Tibial artery (tissue), 4 donors: ENCODE measurements at regions of chr9 and their contacts with region 1.

Region 1: GRCh38 chr9:6383551-6384225 is 29.3 kb upstream of the UHRF2 start:
- DNase-seq: no peak
- H3K4me3 ChIP-seq: no peak overlapping the region
- H3K27ac ChIP-seq: peak overlapping the region; percentile 66 to 70
- H3K4me1 ChIP-seq: peaks cover 0 to 25% (median 3%) of the 10 kb centered on the region in 4 donors
- H3K27me3 ChIP-seq: no peaks in the 10 kb centered on the region
- CTCF ChIP-seq: no peak

Region 2: DNA sequence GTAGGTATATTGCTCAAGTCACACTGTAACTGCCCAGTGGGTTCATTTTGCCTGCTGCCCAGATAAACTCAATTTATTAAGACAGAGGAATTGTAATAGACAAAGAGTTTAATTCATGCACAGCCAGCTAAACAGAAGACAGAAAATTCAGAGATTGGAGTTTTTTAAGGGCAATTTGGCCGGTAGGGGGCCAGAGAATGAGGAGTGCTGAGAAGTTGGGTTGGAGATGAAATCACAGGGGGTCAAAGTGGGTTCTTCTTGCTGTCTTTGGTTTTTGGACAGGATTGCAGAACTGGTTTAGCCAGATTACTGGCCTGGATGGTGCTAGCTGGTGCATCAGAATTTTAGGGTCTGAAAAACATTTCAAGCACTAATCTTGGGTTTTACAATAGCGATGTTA is 188.8 kb before region 1 on chr9:
- intact Hi-C with region 1: no loop called
- DNase-seq: no peak
- H3K4me3 ChIP-seq: no peak overlapping the region
- H3K27ac ChIP-seq: no peak overlapping the region
- H3K4me1 ChIP-seq: no peaks in the 10 kb centered on the region
- H3K27me3 ChIP-seq: no peaks in the 10 kb centered on the region
- CTCF ChIP-seq: no peak

Region 3: GRCh38 chr9:7137040-7137439 is 753.4 kb after region 1 on chr9:
- intact Hi-C with region 1: loop called (anchors 10 kb)
- DNase-seq: peak in 1 of 2 donors; percentile 61
- H3K4me3 ChIP-seq: no peak overlapping the region
- H3K27ac ChIP-seq: no peak overlapping the region
- H3K4me1 ChIP-seq: no peaks in the 10 kb centered on the region
- H3K27me3 ChIP-seq: no peaks in the 10 kb centered on the region
- CTCF ChIP-seq: no peak